HCT116 (cell line): ENCODE measurements at regions of chr18 and their contacts with region 1.

Region 1: GRCh38 chr18:13999231-13999630 is 83.9 kb upstream of the MC2R start:
- DNase-seq: no peak
- ATAC-seq: no peak
- H3K4me3 ChIP-seq: no peak overlapping the region
- H3K27ac ChIP-seq: no peak overlapping the region
- H3K4me1 ChIP-seq: no peaks in the 10 kb centered on the region
- H3K27me3 ChIP-seq: no peaks in the 10 kb centered on the region
- CTCF ChIP-seq: no peak
- POLR2A ChIP-seq: no peak
- RAD21 ChIP-seq: no peak

Region 2: GRCh38 chr18:14053661-14054060 is 54.4 kb after region 1 on chr18:
- CTCF ChIA-PET with region 1: no interaction called
- POLR2A ChIA-PET with region 1: no interaction called
- RAD21 ChIA-PET with region 1: no interaction called
- intact Hi-C with region 1: loop called (anchors 10 kb)
- DNase-seq: no peak
- ATAC-seq: no peak
- H3K4me3 ChIP-seq: no peak overlapping the region
- H3K27ac ChIP-seq: no peak overlapping the region
- H3K4me1 ChIP-seq: no peaks in the 10 kb centered on the region
- H3K27me3 ChIP-seq: no peaks in the 10 kb centered on the region
- CTCF ChIP-seq: no peak
- POLR2A ChIP-seq: no peak
- RAD21 ChIP-seq: no peak